ENCODE measurements at regions of chr2 and their contacts with region 1.

Region 1: DNA sequence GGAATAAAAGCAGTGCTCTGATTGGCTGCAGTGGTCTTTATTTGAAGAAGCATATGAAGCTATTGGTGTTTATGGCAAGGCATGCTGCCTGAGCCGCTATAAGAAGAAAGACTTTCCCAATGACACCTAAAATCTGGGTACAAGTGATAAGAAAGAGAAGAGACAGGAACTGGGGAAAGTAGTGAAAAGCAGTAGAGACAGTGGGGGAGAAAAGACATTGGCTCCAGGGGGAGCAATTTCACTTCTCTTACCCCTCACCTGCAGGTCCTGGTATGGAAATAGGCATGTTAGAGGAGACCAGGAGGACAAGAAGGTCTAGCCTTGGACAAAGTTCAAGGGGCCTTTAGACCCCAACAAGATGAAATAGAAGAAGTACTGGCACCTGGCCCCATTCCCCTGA is 47.1 kb downstream of the PLCL1 start:
- DNase-seq: no peak
- H3K4me3 Mint-ChIP-seq: no peak overlapping the region
- H3K27ac Mint-ChIP-seq: no peak overlapping the region
- H3K4me1 Mint-ChIP-seq: peaks cover 22% of the 10 kb centered on the region
- H3K27me3 Mint-ChIP-seq: no peaks in the 10 kb centered on the region

Region 2: DNA sequence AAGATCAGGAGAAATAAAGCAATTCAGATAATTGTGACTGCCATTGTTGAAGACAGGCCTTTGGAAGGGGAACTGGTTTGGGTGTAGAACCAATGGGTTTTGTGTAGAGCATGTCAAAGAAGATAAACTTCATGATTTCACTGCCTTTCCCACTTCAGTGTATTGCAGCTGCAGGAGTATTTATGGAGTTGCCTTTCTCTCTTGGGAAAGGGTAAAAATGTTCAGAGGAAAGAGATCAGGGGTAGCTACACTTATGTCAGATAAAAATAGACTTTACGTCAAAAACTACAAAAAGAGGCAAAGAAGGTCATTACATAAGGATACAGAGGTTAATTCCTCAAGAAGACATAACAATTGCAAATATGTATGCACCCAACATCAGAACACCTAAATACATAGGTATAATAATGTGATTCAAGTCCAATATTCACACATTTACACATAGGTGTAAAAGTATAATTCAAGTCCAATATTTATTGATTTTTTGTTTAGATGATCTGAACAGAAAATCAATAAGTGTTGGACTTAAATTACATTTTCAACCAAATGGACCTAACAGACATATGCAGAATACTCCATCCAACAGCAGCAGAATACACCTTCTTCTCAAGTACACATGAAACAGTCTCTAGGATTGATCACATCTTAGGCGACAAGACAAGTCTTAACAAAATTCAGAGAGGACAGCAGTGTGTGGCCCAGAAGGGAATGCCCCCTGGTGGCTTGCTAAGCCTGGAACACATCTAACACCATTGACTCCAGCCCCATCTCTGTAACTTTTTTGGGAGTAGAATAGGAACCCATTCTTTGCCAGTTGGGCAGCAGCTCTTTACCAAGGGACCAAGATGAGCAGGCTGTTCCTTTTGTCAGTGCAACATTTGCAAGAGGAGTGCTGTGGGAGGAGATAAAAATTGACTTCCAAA is 202.6 kb after region 1 on chr2:
- intact Hi-C with region 1: loop called (anchors 1 kb)
- DNase-seq: peak; percentile 10
- H3K4me3 Mint-ChIP-seq: no peak overlapping the region
- H3K27ac Mint-ChIP-seq: no peak overlapping the region
- H3K4me1 Mint-ChIP-seq: no peaks in the 10 kb centered on the region
- H3K27me3 Mint-ChIP-seq: peaks cover 3% of the 10 kb centered on the region